ENCODE measurements at regions of chr2 and their contacts with region 1.

Region 1: DNA sequence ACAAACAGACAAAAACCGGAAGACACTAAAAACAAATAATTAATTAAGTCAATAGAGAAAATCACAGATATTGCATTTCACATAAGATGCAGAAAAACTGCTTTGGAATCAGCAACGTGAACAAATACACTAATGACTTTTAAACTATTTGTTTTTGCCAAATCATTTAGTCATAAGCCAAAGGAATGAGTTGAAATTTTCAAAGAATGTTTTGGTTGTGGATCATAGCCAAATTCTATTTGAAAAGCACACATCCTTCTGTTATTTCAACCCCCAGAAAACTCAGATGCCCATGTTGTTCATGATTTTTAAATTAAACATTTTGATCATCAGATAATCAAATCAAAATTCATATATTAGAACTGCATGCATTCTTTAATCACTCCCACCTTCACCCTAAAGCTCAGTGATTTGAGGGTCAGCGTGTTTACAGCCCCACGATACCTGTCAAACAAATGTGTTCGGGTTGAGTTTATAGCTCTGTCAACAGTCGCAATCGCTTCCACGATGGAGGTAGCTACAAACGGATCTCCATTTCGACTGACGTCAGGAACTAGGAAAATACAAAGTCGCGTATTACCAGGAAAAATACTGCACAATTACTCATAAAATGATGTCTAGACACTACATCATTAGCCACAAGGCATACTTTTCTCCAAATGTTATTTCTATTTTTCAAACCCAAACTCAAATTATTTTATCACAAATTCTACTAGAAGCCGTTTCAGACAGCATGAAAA is 90.2 kb downstream of the PXDN start:
- DNase-seq: no peak
- ATAC-seq: no peak
- H3K4me3 ChIP-seq: no peak overlapping the region
- H3K27ac ChIP-seq: peak overlapping the region; percentile 35 to 54 (median 44)
- H3K4me1 ChIP-seq: no peaks in the 10 kb centered on the region
- H3K27me3 ChIP-seq: peaks cover 0 to 9% (median 5%) of the 10 kb centered on the region in 3 donors
- CTCF ChIP-seq: no peak
- POLR2A ChIP-seq: no peak

Region 2: DNA sequence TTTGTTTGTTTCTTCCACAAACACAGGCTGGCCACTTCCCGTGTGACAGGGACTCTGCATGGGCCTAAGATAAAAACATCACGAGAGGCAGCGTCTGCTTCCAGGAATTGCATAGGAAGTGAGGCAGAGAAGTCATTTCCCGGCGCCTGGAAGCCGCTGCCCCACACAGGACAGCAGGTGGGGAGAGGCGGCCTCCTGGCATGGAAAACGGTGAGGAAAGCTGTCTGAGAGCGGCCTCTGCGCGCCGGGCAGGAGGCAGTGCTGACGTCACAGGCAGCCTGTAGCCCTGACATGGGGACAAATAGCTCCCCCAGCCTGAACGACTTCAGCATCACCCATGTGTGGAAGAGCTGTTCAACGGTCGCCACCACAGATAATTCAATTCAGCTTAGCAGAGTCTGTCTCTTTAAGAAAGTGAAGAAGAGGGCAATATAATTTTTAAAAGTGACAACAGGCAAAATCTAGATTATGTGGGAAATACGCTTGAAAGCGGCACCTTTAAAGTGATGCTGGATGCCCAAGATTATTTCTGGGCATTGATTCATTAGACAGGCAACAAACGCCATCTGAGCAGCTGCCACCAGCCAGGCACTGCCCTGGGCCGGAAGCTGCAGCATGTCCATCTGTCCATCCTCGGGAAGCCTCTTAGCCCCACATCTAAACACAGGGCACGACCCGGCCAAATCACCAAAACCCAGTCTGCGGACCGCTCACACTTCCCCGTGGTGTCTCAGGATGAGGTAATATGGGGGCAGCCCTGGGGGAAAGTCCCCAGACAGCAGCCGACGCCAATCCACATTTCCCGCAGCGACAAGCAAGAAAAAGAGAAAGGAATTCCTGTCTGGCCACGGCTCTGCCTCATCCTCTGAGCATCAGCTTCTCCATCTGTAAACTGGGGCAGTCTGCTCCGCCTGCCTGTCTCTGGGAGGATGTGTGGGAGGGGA is 48.8 kb before region 1 on chr2:
- in situ Hi-C with region 1: no loop called
- intact Hi-C with region 1: loop called (anchors 5 kb)
- DNase-seq: peak in 1 of 2 donors; percentile 44
- ATAC-seq: peak; percentile 41 to 56
- H3K4me3 ChIP-seq: peak overlapping the region in 1 of 4 donors; percentile 19
- H3K27ac ChIP-seq: peak overlapping the region; percentile 44 to 59 (median 50)
- H3K4me1 ChIP-seq: no peaks in the 10 kb centered on the region
- H3K27me3 ChIP-seq: peaks cover 4 to 27% (median 23%) of the 10 kb centered on the region in 3 donors
- CTCF ChIP-seq: no peak
- POLR2A ChIP-seq: no peak

Region 3: DNA sequence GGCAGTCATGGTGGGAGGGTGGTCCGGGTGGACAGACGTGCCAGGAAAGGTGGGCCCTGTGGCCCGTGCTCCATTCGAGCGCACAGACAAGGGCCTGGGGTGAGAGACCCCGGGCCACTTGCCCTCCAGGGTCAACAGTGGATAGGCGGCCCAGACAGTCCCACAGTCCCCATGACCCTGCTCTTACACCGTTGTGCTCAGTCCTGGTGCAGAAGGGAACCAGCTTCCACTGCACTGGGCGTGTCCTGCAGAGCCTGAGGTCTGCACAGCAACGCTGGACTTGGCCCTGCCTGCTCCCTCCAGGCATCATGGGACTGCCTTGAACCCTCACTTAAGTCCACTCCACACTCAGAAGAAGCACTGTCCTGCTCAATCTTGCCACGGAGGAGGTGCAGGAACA is 38.2 kb after region 1 on chr2:
- in situ Hi-C with region 1: no loop called
- intact Hi-C with region 1: loop called (anchors 5 kb)
- DNase-seq: no peak
- ATAC-seq: no peak
- H3K4me3 ChIP-seq: no peak overlapping the region
- H3K27ac ChIP-seq: no peak overlapping the region
- H3K4me1 ChIP-seq: no peaks in the 10 kb centered on the region
- H3K27me3 ChIP-seq: no peaks in the 10 kb centered on the region
- CTCF ChIP-seq: no peak
- POLR2A ChIP-seq: no peak

Region 4: DNA sequence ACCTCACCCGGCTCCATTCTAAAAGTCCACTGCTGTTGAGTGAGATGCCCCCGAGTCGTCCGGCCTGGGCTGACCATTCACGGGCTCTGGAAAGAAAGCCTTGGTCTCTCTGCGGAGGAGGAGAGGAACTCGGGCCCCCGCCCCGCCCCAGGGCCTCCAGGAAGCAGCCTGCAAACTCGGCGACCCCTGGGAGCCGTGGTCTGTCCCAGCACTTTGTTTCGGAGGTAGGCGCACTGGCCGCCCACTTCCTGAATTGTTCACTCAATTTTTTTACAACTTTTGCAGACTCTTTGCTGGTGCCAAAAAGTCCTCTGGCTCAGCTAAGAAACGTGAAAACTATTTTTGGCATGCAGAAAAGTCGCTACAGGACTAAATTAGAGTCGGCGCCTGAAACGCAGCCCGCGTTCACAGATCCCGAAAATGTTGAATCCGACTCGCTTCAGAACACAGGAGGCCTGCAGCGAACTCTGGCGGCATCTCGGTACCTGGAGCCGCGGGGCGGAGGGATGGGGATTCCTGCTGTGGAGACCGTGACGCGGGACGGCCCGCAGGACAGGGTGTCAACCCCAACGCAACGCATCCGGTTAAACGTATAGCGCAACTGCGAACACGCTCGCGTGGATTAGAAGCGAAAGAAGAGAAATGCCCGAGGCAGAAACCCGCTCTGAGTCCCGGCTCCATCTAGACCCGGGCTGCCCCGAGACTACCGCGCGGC is 88.7 kb after region 1 on chr2:
- in situ Hi-C with region 1: no loop called
- intact Hi-C with region 1: loop called (anchors 2 kb)
- DNase-seq: peak; percentile 58 to 63
- ATAC-seq: peak; percentile 31 to 53
- H3K4me3 ChIP-seq: peak overlapping the region; percentile 62 to 69 (median 68)
- H3K27ac ChIP-seq: peak overlapping the region; percentile 82 to 87 (median 84)
- H3K4me1 ChIP-seq: peaks cover 3 to 12% of the 10 kb centered on the region in 2 donors
- H3K27me3 ChIP-seq: peaks cover 6 to 18% (median 17%) of the 10 kb centered on the region in 3 donors
- CTCF ChIP-seq: peak in 3 of 5 experiments; percentile 43 to 55 (median 44)
- POLR2A ChIP-seq: no peak

Measured in gastrocnemius medialis (tissue), 4 donors.